HepG2 (cell line): ENCODE measurements at regions of chr9 and their contacts with region 1.

Region 1: DNA sequence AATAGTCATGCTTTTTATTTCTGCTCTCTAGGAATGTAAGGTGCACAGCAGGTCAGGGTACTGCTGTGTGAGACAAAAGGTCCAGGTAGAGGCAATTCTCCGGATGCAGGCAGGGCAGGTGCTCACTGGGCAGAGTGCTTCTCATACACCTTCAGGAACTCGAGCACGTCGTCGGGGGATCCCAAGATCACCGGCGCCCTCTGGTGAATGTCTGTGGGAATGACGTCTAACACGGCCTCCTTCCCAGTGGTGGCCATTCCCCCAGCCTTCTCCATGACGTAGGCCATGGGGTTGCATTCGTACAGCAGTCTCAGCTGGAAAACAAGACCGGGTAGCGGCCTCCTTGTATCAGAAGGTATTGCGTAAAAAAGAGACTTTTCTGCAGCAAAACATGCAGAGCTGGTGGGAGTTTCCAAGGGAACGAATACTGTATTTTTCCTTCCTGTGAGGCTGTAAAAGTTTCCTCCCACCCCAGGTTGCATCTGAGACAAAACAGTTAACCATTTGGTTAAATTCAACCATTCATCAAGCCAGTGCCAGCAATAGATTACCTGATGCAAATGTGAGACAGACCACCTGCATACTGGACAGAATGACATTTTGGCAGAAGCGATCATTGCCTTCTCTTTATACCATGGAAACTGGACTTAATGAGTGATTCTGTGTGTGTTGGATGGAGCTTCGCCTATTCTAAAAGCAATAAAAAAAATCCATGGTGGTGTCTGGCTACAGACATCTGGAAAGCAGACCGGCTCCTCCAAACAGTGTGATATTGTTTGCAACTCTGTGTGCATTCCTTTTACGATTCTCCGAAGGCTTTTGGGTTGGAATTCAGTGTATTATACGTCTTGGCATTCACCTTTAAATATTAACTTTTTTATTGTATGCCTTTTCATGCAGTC is 9.9 kb upstream of the FBP2 start:
- DNase-seq: peak; percentile 62
- ATAC-seq: peak; percentile 57
- H3K4me3 ChIP-seq: peak overlapping the region in 2 of 3 experiments; percentile 15 to 55; a peak in 3 of 6 replicates
- H3K27ac ChIP-seq: no peak overlapping the region
- H3K4me1 ChIP-seq: peaks cover 78% of the 10 kb centered on the region
- H3K27me3 ChIP-seq: no peaks in the 10 kb centered on the region
- CTCF ChIP-seq: peak; percentile 92
- EP300 ChIP-seq: no peak
- POLR2A ChIP-seq: no peak
- RAD21 ChIP-seq: peak; percentile 73; the same call in 1 of the 2 replicates

Region 2: DNA sequence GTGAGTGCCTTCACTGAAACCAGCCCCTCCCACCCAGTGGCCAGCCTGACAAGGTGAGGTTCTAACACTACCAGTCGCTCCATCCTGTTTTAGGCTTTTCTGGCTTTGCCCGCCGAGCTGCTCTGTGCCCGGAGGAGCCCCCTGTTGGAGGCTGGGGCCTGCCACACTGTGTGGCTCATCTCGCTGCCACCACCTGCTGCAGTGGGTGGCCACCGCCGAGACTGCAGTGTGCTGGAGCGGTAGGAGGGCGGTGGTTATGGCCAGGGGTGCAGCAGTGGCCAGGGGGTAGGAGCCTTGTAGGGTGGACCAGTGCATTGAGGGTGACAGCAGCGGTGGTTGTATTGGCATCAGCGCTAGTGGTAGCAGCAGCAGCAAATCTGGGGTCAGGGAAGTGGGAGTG is 123.3 kb before region 1 on chr9:
- CTCF ChIA-PET with region 1: no interaction called
- POLR2A ChIA-PET with region 1: no interaction called
- in situ Hi-C with region 1: no loop called
- intact Hi-C with region 1: no loop called
- DNase-seq: no peak
- ATAC-seq: peak; percentile 62
- H3K4me3 ChIP-seq: no peak overlapping the region
- H3K27ac ChIP-seq: no peak overlapping the region
- H3K4me1 ChIP-seq: no peaks in the 10 kb centered on the region
- H3K27me3 ChIP-seq: no peaks in the 10 kb centered on the region
- CTCF ChIP-seq: no peak
- EP300 ChIP-seq: no peak
- POLR2A ChIP-seq: no peak
- RAD21 ChIP-seq: no peak

Region 3: DNA sequence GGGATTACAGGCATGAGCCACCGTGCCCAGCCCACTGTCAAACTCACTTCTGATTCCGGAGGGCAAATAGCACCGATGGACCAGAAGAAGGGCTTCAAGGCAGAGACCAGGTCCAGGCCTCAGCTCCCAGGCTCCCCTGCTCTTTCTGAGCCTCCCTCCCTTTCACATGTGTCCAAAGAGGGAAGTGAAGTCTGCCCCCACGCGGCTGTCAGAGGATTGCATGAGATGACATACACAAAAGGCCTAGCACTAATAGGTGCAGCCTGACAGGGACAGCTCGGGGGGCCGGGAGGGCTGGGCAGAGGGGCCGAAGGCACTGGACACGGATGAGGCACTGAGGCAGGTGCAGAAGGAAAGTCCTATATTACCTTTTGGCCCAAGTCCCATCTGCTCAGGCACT is 19.7 kb after region 1 on chr9:
- CTCF ChIA-PET with region 1: interaction called, 6 read pairs
- POLR2A ChIA-PET with region 1: interaction called, 12 read pairs
- in situ Hi-C with region 1: no loop called
- intact Hi-C with region 1: no loop called
- DNase-seq: peak; percentile 85
- ATAC-seq: peak; percentile 95
- H3K4me3 ChIP-seq: peak overlapping the region in 1 of 3 experiments; percentile 39; a peak in 2 of 6 replicates
- H3K27ac ChIP-seq: no peak overlapping the region
- H3K4me1 ChIP-seq: peaks cover 14% of the 10 kb centered on the region
- H3K27me3 ChIP-seq: peaks cover 2 to 8% of the 10 kb centered on the region in 2 experiments; a peak in 3 of 5 replicates
- CTCF ChIP-seq: peak; percentile 96
- EP300 ChIP-seq: no peak
- POLR2A ChIP-seq: no peak
- RAD21 ChIP-seq: peak; percentile 84